ENCODE measurements at regions of chr17 and their contacts with region 1.

Region 1: GRCh38 chr17:37220607-37220953 is 155.2 kb upstream of the C17orf78 start:
- DNase-seq: peak; percentile 5
- H3K4me3 Mint-ChIP-seq: no peak overlapping the region
- H3K27ac Mint-ChIP-seq: no peak overlapping the region
- H3K4me1 Mint-ChIP-seq: peaks cover 5% of the 10 kb centered on the region
- H3K27me3 Mint-ChIP-seq: no peaks in the 10 kb centered on the region

Region 2: DNA sequence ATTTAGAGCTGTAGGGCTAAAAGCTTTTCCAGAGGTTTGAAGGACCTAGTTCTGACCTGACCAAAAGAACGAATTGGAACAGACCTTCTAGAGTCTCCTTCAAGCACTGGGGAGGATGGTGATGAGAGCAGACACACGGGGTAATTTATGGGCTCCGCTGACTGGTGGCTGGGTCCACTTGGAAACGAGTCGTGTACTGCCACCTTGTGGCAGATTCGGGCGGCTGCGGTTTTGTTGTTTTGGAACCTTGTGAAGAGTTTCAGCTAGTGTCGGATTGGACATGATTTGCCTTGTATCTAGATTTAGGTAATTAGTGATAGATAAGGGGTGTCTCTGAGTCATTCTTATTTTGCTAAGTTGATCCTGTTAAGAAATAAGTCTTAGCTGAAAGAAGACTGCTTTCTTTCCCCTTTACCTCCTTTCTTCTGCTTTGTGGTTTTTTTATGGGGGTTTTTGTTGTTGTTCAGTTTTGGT is 172.9 kb before region 1 on chr17:
- intact Hi-C with region 1: loop called (anchors 10 kb)
- DNase-seq: peak; percentile 69
- H3K4me3 Mint-ChIP-seq: no peak overlapping the region
- H3K27ac Mint-ChIP-seq: peak overlapping the region; percentile 4
- H3K4me1 Mint-ChIP-seq: peaks cover 15% of the 10 kb centered on the region
- H3K27me3 Mint-ChIP-seq: no peaks in the 10 kb centered on the region

Region 3: GRCh38 chr17:37109731-37110710 is 110.6 kb before region 1 on chr17:
- intact Hi-C with region 1: loop called (anchors 2 kb)
- DNase-seq: no peak
- H3K4me3 Mint-ChIP-seq: no peak overlapping the region
- H3K27ac Mint-ChIP-seq: no peak overlapping the region
- H3K4me1 Mint-ChIP-seq: no peaks in the 10 kb centered on the region
- H3K27me3 Mint-ChIP-seq: no peaks in the 10 kb centered on the region